Posterior vena cava (tissue), 2 donors: ENCODE measurements at regions of chr12 and their contacts with region 1.

Region 1: DNA sequence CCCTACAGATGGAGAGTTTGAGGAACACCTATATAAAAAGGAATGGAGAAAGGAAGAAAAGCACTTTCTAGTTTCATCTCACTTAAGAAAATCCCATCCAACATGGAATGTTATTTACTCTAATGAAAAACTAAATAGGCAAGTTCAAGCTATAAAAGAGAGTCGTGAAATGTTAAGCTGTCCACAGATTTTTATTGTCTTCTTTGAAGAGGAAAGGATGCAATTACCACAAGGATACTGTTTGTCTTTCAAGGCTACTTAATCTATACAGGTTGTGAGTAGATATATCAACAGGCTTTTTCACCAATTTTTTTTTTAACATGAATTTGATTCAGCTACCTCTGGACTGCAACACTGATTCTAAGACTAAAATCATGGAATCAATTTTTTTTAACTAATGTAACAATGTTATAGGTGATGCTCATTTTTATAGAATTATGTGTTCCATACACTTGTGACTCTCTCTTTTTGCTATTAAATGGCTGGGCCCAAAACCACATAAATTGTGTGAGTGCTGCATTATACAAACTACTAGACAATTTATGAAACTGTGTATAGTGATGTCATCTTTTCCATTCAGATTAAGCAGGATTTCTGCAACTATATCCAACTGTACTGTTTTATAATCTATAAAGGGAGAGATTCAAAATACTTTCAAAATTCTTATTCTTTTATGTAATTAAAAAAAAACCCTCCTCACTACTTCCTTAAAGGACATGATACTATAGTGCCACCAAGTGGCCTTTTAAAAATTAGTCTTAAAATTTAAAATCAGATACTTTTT is 26.8 kb upstream of the BMAL2 start:
- DNase-seq: no peak

Region 2: GRCh38 chr12:27024291-27024690 is 281.6 kb before region 1 on chr12:
- intact Hi-C with region 1: loop called in 1 of 2 experiments (anchors 10 kb)
- DNase-seq: peak; percentile 69

Region 3: DNA sequence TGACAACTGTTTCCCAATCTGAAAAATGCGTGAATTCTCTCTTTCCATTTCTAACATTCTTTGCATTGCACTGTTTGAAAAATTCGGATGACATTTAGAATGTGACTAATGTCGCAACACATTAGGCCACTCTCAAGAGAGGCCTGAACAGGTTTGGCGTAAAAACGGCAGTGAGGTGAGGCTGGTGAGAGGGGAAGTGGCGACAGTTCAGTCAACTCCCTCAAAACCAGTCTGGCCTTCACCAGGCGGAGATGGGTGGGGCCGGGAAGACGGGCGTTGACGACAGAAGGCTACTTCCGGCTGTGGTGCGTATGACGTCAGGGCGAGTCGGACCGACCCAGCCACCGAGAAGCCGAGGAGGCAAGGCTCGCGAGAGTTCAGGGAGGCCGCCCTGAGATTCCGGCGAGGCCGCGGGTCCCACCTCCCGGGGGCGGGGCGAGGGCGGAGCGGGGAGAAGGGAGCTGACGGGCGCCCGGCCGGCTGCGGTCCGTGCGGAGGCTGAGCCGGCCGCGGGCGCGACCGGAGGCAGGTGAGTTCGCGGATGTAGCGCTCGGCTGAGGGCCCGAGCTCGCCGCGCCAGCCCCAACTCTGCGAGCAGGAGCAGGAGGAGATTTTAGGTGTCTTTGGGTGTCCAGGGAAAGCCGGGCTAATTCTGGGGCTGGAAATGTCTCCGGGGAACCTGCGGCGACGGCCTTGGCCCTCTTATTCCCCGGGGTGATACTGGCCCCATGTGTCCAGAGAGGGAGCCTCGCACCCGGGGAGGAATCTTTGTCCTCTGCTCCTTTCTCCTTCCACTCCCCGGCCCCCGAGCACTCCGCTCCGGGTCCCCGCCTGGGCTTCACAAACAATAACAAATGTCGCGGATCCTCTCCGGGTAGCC is 61.8 kb before region 1 on chr12 and contains the start of gene STK38L:
- intact Hi-C with region 1: no loop called
- DNase-seq: peak; percentile 100
- total RNA-seq, gene STK38L: 93.3 to 221 TPM

Region 4: GRCh38 chr12:27383429-27384260 is 77.8 kb after region 1 on chr12:
- intact Hi-C with region 1: no loop called
- DNase-seq: peak; percentile 94

Region 5: DNA sequence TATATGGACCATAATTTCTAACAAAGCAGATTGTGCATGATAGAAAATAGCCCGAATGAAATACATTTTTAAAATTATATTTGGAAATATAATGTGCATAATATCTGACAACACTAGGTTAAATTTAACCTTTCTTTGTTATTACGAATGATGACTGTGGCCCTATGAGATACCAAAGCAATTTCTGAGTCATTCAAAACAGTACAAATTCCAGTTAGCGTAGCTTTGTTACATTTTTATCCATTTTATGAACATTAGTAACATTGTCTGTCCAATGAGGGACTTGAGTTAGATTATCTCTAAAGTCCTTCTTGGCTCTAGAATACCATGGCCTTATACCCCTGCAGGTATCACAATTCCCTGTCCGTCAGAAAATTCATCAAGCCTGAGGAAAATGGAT is 351.4 kb after region 1 on chr12:
- intact Hi-C with region 1: loop called in 1 of 2 experiments (anchors 5 kb)
- DNase-seq: no peak